WTC11 (cell line): ENCODE measurements at regions of chr19 and their contacts with region 1.

Region 1: GRCh38 chr19:18488838-18489626 is 32.8 kb downstream of the ELL start:
- DNase-seq: peak; percentile 73
- ATAC-seq: peak; percentile 73
- H3K4me3 Mint-ChIP-seq: no peak overlapping the region
- H3K27ac Mint-ChIP-seq: peak overlapping the region; percentile 65; the same call in 1 of the 2 replicates
- H3K4me1 Mint-ChIP-seq: peaks cover 32% of the 10 kb centered on the region
- H3K27me3 Mint-ChIP-seq: no peaks in the 10 kb centered on the region
- CTCF ChIP-seq: no peak

Region 2: GRCh38 chr19:18397242-18398202 is 91.5 kb before region 1 on chr19 and contains the start of gene LRRC25:
- CTCF ChIA-PET with region 1: no interaction called
- POLR2A ChIA-PET with region 1: no interaction called
- DNase-seq: peak; percentile 89
- ATAC-seq: peak; percentile 87
- H3K4me3 Mint-ChIP-seq: 0 out of 2 replicates have a peak within 1 kb of the TSS, but pooled peaks have one; percentile 8
- H3K27ac Mint-ChIP-seq: no peak within 1 kb of the TSS
- H3K4me1 Mint-ChIP-seq: peaks cover 8% of the 10 kb centered on the region
- H3K27me3 Mint-ChIP-seq: no peaks in the 10 kb centered on the region
- CTCF ChIP-seq: no peak
- total RNA-seq, gene LRRC25: 0.07 to 0.31 TPM (median 0.18 TPM) in 3 replicates

Region 3: DNA sequence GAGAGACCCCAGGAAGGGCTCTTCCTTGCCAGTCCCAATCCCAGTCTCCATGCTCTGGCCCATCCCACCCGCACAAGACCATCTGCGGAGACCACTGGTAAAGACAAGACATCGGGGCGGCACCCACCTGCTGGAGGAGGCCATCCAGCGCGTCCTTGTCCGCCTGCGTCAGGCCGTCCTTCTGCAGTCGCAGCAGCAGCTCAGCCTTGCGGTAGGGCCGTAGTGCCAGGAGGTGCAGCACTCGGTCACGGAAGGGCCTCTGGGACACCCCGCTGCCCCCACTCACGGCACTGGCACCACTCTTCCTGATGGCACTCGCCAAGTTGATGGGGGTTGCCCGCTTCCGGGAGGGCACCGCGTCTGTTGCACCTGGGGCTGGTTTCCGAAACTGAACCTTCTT is 27.6 kb before region 1 on chr19:
- CTCF ChIA-PET with region 1: interaction called, 17 read pairs
- POLR2A ChIA-PET with region 1: no interaction called
- DNase-seq: no peak
- ATAC-seq: no peak
- H3K4me3 Mint-ChIP-seq: no peak overlapping the region
- H3K27ac Mint-ChIP-seq: peak overlapping the region; percentile 48; the same call in 1 of the 2 replicates
- H3K4me1 Mint-ChIP-seq: no peaks in the 10 kb centered on the region
- H3K27me3 Mint-ChIP-seq: no peaks in the 10 kb centered on the region
- CTCF ChIP-seq: no peak

Region 4: GRCh38 chr19:18503971-18504885 is 15.2 kb after region 1 on chr19:
- CTCF ChIA-PET with region 1: interaction called, 14 read pairs
- POLR2A ChIA-PET with region 1: no interaction called
- DNase-seq: no peak
- ATAC-seq: peak; percentile 68
- H3K4me3 Mint-ChIP-seq: no peak overlapping the region
- H3K27ac Mint-ChIP-seq: peak overlapping the region; percentile 73; the same call in 1 of the 2 replicates
- H3K4me1 Mint-ChIP-seq: peaks cover 13% of the 10 kb centered on the region
- H3K27me3 Mint-ChIP-seq: no peaks in the 10 kb centered on the region
- CTCF ChIP-seq: no peak

Region 5: DNA sequence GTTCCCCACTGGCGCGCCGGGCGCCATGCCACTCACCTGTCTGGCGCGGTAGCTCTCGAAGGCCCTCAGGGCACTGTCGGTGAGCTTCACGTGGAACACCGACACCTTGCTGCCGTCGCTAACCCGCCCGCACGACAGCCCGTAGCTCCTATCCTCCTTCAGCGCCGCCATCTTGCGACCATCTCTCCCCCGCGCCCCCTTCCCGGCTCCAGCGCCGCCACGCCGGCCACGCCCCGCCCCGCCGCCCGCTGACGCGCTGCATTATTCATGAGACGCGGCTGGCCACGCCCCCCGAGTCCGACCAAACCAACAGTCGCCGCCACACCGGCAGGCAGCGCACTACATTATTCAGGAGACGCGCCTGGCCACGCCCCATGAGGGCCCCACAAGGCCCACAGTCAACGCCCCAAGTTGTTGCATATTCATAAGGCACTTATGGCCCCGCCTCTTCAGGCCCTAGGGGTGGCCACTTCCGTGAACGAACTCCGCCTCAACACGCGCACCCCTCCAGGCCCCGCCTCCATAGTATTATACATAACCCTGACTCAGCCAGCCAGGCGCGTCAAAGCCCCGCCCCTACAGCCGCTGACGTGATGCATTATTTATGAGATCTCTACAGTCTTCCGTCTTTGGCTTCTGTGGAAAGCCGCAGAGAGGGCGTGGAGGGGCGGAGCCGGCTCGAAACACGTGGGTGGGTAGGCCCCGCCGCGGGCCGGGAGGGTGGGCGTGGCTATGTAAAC is 33.0 kb after region 1 on chr19 and contains the start of gene ELL:
- CTCF ChIA-PET with region 1: interaction called, 31 read pairs
- POLR2A ChIA-PET with region 1: no interaction called
- DNase-seq: peak; percentile 100
- ATAC-seq: peak; percentile 95
- H3K4me3 Mint-ChIP-seq: peak within 1 kb of the TSS; percentile 81
- H3K27ac Mint-ChIP-seq: peak within 1 kb of the TSS; percentile 87
- H3K4me1 Mint-ChIP-seq: peaks cover 7% of the 10 kb centered on the region
- H3K27me3 Mint-ChIP-seq: no peaks in the 10 kb centered on the region
- CTCF ChIP-seq: no peak
- total RNA-seq, gene ELL: 11.6 to 17.3 TPM (median 13.1 TPM) in 3 replicates

Region 6: DNA sequence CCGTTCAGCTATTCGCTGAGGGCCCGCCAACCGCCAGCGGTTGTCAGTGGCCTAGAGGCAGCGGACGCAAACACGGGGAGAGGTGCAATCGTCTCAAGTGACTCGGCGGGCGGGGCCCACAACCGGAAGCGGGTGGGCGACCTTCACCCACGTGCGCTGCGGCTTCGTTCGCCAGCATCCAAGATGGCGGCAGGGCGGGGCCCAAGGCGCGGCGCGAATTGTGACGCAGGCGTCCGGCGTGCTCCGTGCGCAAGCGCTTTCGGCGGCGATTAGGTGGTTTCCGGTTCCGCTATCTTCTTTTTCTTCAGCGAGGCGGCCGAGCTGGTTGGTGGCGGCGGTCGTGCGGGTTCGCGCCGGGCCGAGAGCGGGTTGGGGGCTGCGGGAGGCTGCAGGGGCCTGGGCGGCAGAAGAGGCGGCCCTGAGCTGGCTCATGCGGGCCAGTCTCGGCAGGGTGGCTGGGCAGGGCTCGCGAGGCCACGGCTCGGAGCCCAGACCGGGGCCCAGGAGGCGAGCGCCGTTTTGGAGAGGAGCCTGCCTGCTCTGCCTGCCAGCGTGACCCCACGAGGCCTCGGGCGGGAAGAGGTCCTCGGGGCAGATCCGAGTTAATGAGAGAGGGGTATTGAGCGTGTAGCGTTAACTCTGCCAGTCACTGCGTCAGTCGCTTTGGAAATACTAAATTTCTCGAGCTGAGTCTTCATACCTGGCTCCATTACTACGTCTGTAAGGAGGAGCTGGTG is 82.7 kb after region 1 on chr19 and contains the start of gene UBA52:
- CTCF ChIA-PET with region 1: interaction called, 14 read pairs
- POLR2A ChIA-PET with region 1: no interaction called
- DNase-seq: peak; percentile 99
- ATAC-seq: peak; percentile 92
- H3K4me3 Mint-ChIP-seq: peak within 1 kb of the TSS; percentile 76
- H3K27ac Mint-ChIP-seq: peak within 1 kb of the TSS; percentile 98
- H3K4me1 Mint-ChIP-seq: peaks cover 16% of the 10 kb centered on the region
- H3K27me3 Mint-ChIP-seq: no peaks in the 10 kb centered on the region
- CTCF ChIP-seq: no peak
- total RNA-seq, gene UBA52: 1,300 to 1,361 TPM (median 1,328 TPM) in 3 replicates

Region 7: GRCh38 chr19:18594096-18594823 is 105.2 kb after region 1 on chr19:
- CTCF ChIA-PET with region 1: interaction called, 18 read pairs
- POLR2A ChIA-PET with region 1: interaction called, 3 read pairs
- DNase-seq: peak; percentile 82
- ATAC-seq: peak; percentile 34
- H3K4me3 Mint-ChIP-seq: peak overlapping the region; percentile 77
- H3K27ac Mint-ChIP-seq: peak overlapping the region; percentile 94
- H3K4me1 Mint-ChIP-seq: peaks cover 53% of the 10 kb centered on the region
- H3K27me3 Mint-ChIP-seq: peaks cover 4% of the 10 kb centered on the region
- CTCF ChIP-seq: peak; percentile 63